CD8-positive, alpha-beta memory T cell (primary cell): ENCODE measurements at regions of chr17 and their contacts with region 1.

Region 1: GRCh38 chr17:20992987-20993862 is 49.6 kb downstream of the USP22 start:
- DNase-seq: peak; percentile 28 to 65 (median 40)
- H3K4me3 ChIP-seq: no peak overlapping the region
- H3K4me3 Mint-ChIP-seq: no peak overlapping the region
- H3K27ac ChIP-seq: no peak overlapping the region
- H3K27ac Mint-ChIP-seq: peak overlapping the region in 1 of 8 donors; percentile 17
- H3K4me1 ChIP-seq: no peaks in the 10 kb centered on the region
- H3K4me1 Mint-ChIP-seq: peaks cover 0 to 3% (median 0%) of the 10 kb centered on the region in 3 donors
- H3K27me3 ChIP-seq: no peaks in the 10 kb centered on the region
- H3K27me3 Mint-ChIP-seq: no peaks in the 10 kb centered on the region

Region 2: GRCh38 chr17:21007646-21008045 is 14.4 kb after region 1 on chr17:
- CTCF ChIA-PET with region 1: interaction called, 19 read pairs
- POLR2A ChIA-PET with region 1: no interaction called
- DNase-seq: no peak
- H3K4me3 ChIP-seq: no peak overlapping the region
- H3K4me3 Mint-ChIP-seq: no peak overlapping the region
- H3K27ac ChIP-seq: no peak overlapping the region
- H3K27ac Mint-ChIP-seq: no peak overlapping the region
- H3K4me1 ChIP-seq: no peaks in the 10 kb centered on the region
- H3K4me1 Mint-ChIP-seq: peaks cover 0 to 3% (median 0%) of the 10 kb centered on the region in 3 donors
- H3K27me3 ChIP-seq: no peaks in the 10 kb centered on the region
- H3K27me3 Mint-ChIP-seq: no peaks in the 10 kb centered on the region

Region 3: DNA sequence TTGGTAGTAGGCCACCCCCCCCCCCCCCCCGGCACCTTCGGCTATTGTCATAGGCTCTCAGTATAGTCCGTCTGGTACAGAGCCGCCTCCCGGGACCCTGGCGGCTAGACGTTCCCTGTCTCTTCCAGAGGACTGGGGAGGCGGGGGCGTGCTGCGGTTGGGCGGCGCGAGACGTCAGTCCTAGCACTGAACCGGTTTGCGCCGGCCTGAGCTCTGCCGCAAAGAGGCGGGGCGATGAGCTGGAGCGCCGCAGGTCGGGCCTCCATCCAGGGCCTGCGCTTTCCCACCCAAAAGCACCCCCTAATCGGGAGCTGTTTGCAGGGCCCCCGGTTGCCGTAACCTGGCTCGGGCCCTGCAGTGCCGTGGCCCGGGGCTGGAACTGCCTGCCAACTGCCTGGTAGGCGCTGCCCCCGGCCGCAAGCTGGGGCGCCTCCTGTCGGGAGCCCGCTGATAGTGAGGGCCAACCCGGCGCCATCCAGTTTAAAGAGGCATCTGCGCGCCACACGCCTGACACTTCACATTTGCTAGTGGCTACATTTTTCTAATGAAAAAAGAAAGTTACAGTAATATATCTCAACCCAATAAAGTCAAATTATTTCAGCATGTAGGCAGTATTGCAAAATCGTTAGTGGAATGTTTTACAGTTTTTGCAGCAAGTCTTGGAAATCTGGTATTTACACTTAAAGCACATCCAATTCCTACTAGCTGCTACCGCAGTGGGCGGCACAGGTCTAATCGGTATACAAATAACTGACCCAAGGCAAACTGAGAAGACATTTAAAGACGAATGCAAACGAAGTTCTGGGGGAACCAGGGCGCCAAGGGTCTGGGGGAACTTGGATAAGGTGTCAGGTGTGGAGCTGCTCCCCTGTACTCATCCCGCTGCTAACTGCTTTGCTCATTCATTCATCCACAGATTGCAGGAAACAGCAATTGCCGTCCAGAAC is 50.3 kb after region 1 on chr17:
- CTCF ChIA-PET with region 1: interaction called, 13 read pairs
- POLR2A ChIA-PET with region 1: no interaction called
- DNase-seq: peak; percentile 96 to 98 (median 96)
- H3K4me3 ChIP-seq: peak overlapping the region; percentile 57
- H3K4me3 Mint-ChIP-seq: peak overlapping the region; percentile 77 to 91 (median 84)
- H3K27ac ChIP-seq: peak overlapping the region; percentile 91
- H3K27ac Mint-ChIP-seq: peak overlapping the region; percentile 91 to 96 (median 94)
- H3K4me1 ChIP-seq: peaks cover 27% of the 10 kb centered on the region
- H3K4me1 Mint-ChIP-seq: peaks cover 30 to 36% (median 35%) of the 10 kb centered on the region in 3 donors
- H3K27me3 ChIP-seq: no peaks in the 10 kb centered on the region
- H3K27me3 Mint-ChIP-seq: peaks cover under 1 to 1% of the 10 kb centered on the region in 2 donors